Tibial artery (tissue), 4 donors: ENCODE measurements at regions of chr13 and their contacts with region 1.

Region 1: GRCh38 chr13:49996951-49997895 is at the start of gene TRIM13:
- DNase-seq: peak; percentile 92 to 94
- H3K4me3 ChIP-seq: peak within 1 kb of the TSS; percentile 70 to 91
- H3K27ac ChIP-seq: peak within 1 kb of the TSS; percentile 97 to 100
- H3K4me1 ChIP-seq: peaks cover 5 to 54% (median 32%) of the 10 kb centered on the region in 4 donors
- H3K27me3 ChIP-seq: no peaks in the 10 kb centered on the region
- CTCF ChIP-seq: peak; percentile 58 to 78

Region 2: DNA sequence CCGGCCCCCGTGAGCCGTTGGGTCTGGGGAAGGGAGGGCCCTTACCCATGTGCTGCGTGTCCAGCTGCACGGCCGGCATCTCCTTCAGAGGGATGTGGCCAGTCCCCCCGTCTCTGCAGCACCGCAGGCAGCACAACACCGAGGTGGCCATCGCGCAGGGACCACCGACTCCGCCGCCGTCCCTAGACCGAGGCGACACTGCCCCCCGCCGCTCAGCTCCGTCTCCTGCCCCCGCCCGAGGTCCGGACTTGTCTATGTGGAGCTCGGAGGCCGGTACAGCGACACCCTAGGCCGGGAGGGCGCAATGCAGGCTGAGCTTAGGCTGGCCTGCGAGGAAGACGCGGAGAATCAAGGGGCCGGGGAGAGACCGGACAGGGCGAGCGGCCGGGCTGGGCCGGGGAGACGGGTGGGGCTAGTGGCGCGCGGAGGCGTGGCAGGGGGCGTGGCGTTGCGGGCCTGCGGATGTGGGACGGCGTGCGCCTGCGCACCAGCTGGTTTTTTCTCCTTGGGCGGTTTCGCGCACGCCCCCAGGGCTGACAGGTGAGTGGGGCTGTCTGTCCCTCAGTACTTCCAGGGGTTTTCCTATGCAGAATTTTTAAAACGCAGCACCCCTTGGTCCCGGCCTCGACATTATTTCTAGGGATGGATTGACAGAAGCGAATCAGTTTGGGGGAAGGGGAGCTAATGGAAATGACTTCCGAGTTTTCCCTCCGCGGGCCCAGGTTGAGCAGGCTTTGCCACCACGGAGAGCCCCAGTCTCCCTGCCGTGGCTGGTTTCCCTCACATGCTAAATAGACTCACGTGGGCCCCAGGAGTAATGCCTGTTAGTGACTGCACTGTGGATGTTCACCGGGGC is 60.9 kb before region 1 on chr13 and contains the start of gene SPRYD7:
- intact Hi-C with region 1: loop called (anchors 5 kb)
- DNase-seq: peak; percentile 97 to 99
- H3K4me3 ChIP-seq: peak within 1 kb of the TSS; percentile 76 to 94
- H3K27ac ChIP-seq: peak within 1 kb of the TSS; percentile 78 to 91
- H3K4me1 ChIP-seq: peaks cover 0 to 42% (median 21%) of the 10 kb centered on the region in 4 donors
- H3K27me3 ChIP-seq: no peaks in the 10 kb centered on the region
- CTCF ChIP-seq: peak; percentile 92

Region 3: DNA sequence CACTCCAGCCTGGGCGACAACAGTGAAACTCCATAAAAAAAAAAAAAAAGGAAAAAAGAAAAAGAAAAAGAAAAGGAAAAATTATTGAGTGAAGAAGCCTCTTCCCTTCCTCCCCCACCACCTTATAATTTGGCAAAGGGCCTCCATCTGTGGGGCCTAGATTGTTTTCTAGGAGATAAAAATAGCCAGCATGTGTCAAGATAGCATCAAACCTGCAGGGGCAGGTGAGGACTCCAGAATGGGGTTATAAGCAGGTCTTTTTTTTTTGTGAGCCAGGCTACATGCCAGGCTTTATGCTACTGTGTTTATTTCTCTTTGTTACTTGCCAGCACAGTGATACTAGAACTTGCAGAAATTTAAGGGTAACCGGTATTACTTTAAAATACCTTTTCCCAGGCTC is 12.1 kb before region 1 on chr13:
- intact Hi-C with region 1: no loop called
- DNase-seq: no peak
- H3K4me3 ChIP-seq: no peak overlapping the region
- H3K27ac ChIP-seq: no peak overlapping the region
- H3K4me1 ChIP-seq: no peaks in the 10 kb centered on the region
- H3K27me3 ChIP-seq: no peaks in the 10 kb centered on the region
- CTCF ChIP-seq: no peak

Region 4: DNA sequence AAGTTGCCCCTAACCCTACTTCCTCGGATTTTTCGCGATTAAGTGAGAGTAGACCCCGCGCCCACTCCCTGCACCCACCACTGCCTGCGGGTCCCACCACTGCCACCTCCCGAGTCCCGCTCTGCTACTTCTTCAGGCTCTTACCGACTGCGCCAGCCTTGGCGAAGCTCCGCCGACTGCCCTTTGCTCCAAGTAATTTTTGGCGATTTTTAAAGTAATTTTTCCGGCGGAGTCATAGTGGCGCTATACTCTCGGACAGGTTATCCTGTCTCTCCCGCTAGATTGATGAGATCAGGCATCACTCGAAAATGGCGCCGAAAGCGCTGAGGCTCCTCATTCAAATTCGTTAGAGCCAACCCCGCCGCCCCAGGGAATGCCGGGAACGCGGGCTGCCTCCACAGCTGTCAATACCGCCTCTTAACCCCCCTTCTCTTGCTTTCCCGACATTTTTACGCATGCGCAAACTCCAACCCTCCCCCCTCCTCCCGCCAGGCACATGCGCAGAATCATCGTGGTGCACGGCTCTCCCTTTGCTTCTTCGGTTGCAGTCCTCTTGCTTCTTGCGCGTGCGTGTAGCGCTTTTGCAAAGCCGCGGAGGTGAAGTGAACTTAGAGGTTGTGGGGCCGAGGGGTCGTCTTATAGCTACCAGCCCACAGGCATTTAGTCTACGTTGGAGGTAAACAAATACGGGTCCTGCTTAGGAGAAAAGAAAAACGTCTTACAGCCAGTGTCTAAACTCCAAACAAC is 84.6 kb after region 1 on chr13:
- intact Hi-C with region 1: loop called (anchors 2 kb)
- DNase-seq: peak; percentile 98 to 99
- H3K4me3 ChIP-seq: peak overlapping the region; percentile 86 to 95
- H3K27ac ChIP-seq: peak overlapping the region; percentile 96 to 98
- H3K4me1 ChIP-seq: peaks cover 0 to 20% (median 7%) of the 10 kb centered on the region in 4 donors
- H3K27me3 ChIP-seq: no peaks in the 10 kb centered on the region
- CTCF ChIP-seq: no peak

Region 5: DNA sequence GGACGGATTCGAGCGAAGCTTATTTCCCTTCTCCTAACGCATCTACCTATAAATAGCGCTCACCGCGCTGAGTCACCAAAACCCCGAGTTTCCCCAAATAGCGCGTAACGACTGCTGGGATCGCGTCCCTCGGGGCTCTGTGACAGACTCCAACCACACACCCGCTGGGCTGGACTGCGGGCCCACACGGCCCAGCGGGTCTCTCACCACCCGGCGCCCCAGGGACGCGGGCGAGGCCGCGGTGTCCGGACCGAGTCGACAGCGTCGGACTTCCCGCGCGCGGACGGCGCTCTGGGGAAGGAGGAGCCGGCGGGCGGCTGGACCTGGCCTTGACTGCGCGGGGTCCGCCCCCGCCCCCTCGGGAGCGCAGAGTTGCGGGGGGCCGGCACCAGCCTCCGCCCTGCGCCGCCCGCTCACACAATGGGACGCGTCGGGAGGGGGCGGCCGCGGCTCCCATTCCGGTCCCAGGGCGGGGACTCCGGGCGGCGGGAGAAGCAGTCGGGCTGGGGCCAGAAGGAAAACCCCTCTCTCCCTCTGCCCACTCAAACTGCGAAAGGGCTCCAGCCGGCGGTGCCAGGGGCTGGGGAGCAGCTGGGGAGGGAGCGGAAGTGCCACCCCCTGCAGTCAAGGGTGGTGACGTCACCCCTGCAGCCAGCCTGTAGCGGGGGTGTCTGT is 126.8 kb after region 1 on chr13:
- intact Hi-C with region 1: loop called (anchors 2 kb)
- DNase-seq: peak; percentile 90 to 95
- H3K4me3 ChIP-seq: peak overlapping the region; percentile 95 to 96
- H3K27ac ChIP-seq: peak overlapping the region; percentile 100
- H3K4me1 ChIP-seq: peaks cover 0 to 35% (median 28%) of the 10 kb centered on the region in 4 donors
- H3K27me3 ChIP-seq: no peaks in the 10 kb centered on the region
- CTCF ChIP-seq: no peak

Region 6: GRCh38 chr13:50261130-50261901 is 264.1 kb after region 1 on chr13:
- intact Hi-C with region 1: no loop called
- DNase-seq: no peak
- H3K4me3 ChIP-seq: no peak overlapping the region
- H3K27ac ChIP-seq: no peak overlapping the region
- H3K4me1 ChIP-seq: no peaks in the 10 kb centered on the region
- H3K27me3 ChIP-seq: no peaks in the 10 kb centered on the region
- CTCF ChIP-seq: no peak

Region 7: GRCh38 chr13:50531917-50532899 is 535.0 kb after region 1 on chr13:
- intact Hi-C with region 1: loop called (anchors 5 kb)
- DNase-seq: no peak
- H3K4me3 ChIP-seq: no peak overlapping the region
- H3K27ac ChIP-seq: no peak overlapping the region
- H3K4me1 ChIP-seq: peaks cover 5 to 28% (median 18%) of the 10 kb centered on the region in 4 donors
- H3K27me3 ChIP-seq: no peaks in the 10 kb centered on the region
- CTCF ChIP-seq: peak; percentile 56 to 64

Region 8: DNA sequence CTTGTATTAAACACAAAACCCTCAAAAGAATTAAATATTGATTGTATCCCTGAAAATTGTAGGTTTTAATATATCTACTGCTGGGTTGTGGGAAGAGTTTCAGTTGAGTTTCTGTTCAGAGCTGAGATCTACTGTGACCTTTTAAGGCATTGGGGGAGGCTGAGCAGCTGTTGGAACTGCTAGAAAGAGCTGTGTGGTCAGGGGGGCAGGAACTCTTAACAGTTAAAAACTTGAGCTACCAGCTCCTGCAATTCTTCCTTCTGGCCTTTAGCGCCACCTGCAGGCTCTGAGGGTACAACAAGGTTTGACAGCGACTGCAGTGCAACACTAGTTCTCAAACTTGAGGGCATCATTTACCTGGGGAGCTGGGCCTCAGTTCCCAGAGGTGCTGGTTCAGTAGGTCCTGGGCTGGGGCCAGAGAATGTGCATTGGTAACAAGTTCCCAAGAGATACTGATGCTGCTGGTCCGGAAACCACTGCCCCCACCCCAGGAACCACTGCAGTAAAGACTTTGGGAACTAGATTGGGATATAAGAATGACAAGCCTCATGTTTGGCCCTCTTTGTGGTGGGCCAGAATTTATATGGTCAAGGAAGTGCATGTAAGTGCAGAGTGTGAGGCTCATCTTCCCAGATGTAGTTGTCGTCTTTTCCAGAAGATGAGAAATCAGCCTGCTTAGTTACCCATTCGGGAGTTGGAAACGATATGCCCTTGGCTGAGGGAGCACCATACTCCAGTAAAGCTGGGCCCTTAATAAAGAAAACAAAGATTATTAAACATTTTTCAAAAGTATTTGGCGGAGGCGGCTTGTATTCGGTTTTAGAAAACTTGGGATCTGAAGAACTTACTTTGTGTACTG is 914.9 kb after region 1 on chr13:
- intact Hi-C with region 1: loop called (anchors 5 kb)
- DNase-seq: peak; percentile 85 to 87
- H3K4me3 ChIP-seq: no peak overlapping the region
- H3K27ac ChIP-seq: no peak overlapping the region
- H3K4me1 ChIP-seq: peaks cover 0 to 31% (median 16%) of the 10 kb centered on the region in 4 donors
- H3K27me3 ChIP-seq: no peaks in the 10 kb centered on the region
- CTCF ChIP-seq: peak; percentile 66 to 71